Activated T-helper 1 cell treated with anti-CD3 and anti-CD28 coated beads, Interleukin-12 subunit alpha, Interleukin-12 subunit beta, Interleukin-2, Interleukin-4 antibody, amounts not matched to agents 30 ng/mL and 10 ng/mL and 1 ng/mL, durations not matched to agents 14 hours and 24 hours and 36 hours (primary cell): ENCODE measurements at regions of chr4 and their contacts with region 1.

Region 1: DNA sequence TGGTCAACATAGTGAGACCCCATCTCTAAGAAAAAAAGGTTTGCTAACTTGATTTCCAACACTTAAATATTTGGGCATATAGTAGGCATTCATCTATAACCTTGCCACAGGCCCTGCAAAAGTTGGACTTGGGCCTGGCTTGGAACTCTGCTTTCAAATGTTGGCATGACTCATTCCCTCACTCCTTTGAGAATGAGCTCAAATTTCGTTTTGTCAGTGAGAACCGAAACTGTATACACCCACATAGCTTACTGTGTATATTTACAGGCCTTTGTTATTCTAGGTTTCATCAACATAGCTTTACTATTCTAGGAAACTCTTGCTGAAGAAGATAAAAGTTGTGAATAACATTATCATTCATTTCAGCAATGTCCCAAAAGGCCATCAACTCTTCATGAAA is 88.7 kb upstream of the ELOVL6 start:
- DNase-seq: no peak
- H3K4me3 Mint-ChIP-seq: peak overlapping the region; percentile 31
- H3K27ac Mint-ChIP-seq: peak overlapping the region; percentile 74
- H3K4me1 Mint-ChIP-seq: peaks cover 15% of the 10 kb centered on the region
- H3K27me3 Mint-ChIP-seq: peaks cover 13% of the 10 kb centered on the region

Region 2: DNA sequence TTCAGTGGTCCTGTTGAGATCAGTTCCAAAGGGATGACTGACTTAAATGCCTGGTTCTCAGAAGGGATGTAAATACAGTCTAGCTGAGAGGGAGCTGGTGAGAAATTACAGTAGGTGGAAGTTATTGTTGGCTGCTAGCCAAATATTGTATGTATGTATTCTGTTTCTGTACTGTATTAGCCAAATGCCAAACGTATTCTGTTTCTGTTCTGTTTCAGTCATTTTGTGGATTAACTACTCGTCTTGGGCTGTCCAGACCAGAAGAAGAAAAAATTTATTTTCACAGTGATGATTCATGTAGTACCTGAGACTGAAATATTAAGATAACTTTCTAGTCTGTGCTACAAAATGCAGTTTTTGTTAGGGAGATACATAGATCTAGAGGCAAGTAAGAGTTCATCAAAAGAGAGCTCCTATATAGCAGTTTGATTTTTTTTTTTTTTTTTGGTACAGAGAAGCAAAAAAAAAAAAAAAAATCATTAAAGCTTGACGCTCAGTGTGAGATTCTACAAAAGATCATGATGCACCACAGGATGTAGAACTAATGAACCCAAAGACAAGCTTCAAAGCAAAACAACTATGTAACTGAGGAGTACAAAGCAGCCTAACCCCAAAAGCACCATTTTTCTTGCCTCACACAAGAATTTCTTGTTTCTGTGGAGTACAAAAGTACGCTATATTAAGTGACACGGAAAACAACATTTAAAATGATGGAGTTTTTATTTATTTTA is 638.7 kb before region 1 on chr4:
- intact Hi-C with region 1: loop called (anchors 1 kb)
- DNase-seq: no peak
- H3K4me3 Mint-ChIP-seq: peak overlapping the region; percentile 69
- H3K27ac Mint-ChIP-seq: peak overlapping the region; percentile 84
- H3K4me1 Mint-ChIP-seq: peaks cover 8% of the 10 kb centered on the region
- H3K27me3 Mint-ChIP-seq: no peaks in the 10 kb centered on the region

Region 3: DNA sequence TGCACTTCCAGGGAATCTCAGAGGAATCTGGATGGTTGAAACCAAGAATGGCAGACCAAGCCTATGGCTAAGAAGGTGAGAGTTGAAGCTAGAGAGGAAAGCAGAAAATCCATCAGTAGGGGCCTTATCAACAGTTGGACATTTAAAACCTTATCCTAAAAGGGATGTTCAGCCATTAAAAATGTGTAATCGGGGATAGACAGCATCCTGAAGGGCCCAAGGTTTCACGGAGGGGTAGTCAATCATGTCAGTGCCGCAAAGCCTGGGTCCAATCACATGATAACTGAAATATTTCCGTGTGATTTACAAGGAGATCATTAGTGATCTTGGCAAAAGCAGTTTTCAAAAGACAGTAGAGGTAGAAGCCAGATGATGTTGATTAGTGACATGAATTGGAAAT is 26.8 kb before region 1 on chr4:
- intact Hi-C with region 1: no loop called
- DNase-seq: no peak
- H3K4me3 Mint-ChIP-seq: no peak overlapping the region
- H3K27ac Mint-ChIP-seq: no peak overlapping the region
- H3K4me1 Mint-ChIP-seq: no peaks in the 10 kb centered on the region
- H3K27me3 Mint-ChIP-seq: peaks cover 14% of the 10 kb centered on the region